Mucosa of descending colon (tissue), 3 donors: ENCODE measurements at regions of chr20 and their contacts with region 1.

Region 1: GRCh38 chr20:37564388-37565133 is 36.9 kb upstream of the BLCAP start:
- DNase-seq: peak in 2 of 3 donors; percentile 43 to 62
- ATAC-seq: peak; percentile 86
- H3K4me3 ChIP-seq: no peak overlapping the region
- H3K4me1 ChIP-seq: no peaks in the 10 kb centered on the region
- CTCF ChIP-seq: peak; percentile 72

Region 2: GRCh38 chr20:37430788-37431460 is 133.6 kb before region 1 on chr20:
- intact Hi-C with region 1: no loop called
- DNase-seq: peak in 1 of 3 donors; percentile 13
- ATAC-seq: no peak
- H3K4me3 ChIP-seq: no peak overlapping the region
- H3K4me1 ChIP-seq: no peaks in the 10 kb centered on the region
- CTCF ChIP-seq: no peak

Region 3: GRCh38 chr20:37990571-37991151 is 426.1 kb after region 1 on chr20:
- intact Hi-C with region 1: loop called in 1 of 2 experiments (anchors 10 kb)
- DNase-seq: peak; percentile 58 to 75 (median 59)
- ATAC-seq: peak; percentile 77
- H3K4me3 ChIP-seq: no peak overlapping the region
- H3K4me1 ChIP-seq: peaks cover 30% of the 10 kb centered on the region
- CTCF ChIP-seq: no peak